ENCODE measurements at regions of chr18 and their contacts with region 1.

Region 1: GRCh38 chr18:75070625-75071483 is 138.1 kb downstream of the PTGR3 start:
- DNase-seq: peak; percentile 19 to 88 (median 74)
- ATAC-seq: peak; percentile 90
- H3K4me3 ChIP-seq: peak overlapping the region; percentile 9 to 46
- H3K4me3 Mint-ChIP-seq: peak overlapping the region; percentile 80
- H3K27ac ChIP-seq: peak overlapping the region; percentile 50 to 86
- H3K27ac Mint-ChIP-seq: peak overlapping the region; percentile 97
- H3K4me1 ChIP-seq: peaks cover 28% of the 10 kb centered on the region
- H3K4me1 Mint-ChIP-seq: peaks cover 41% of the 10 kb centered on the region
- H3K27me3 ChIP-seq: no peaks in the 10 kb centered on the region
- H3K27me3 Mint-ChIP-seq: no peaks in the 10 kb centered on the region
- CTCF ChIP-seq: no peak

Region 2: DNA sequence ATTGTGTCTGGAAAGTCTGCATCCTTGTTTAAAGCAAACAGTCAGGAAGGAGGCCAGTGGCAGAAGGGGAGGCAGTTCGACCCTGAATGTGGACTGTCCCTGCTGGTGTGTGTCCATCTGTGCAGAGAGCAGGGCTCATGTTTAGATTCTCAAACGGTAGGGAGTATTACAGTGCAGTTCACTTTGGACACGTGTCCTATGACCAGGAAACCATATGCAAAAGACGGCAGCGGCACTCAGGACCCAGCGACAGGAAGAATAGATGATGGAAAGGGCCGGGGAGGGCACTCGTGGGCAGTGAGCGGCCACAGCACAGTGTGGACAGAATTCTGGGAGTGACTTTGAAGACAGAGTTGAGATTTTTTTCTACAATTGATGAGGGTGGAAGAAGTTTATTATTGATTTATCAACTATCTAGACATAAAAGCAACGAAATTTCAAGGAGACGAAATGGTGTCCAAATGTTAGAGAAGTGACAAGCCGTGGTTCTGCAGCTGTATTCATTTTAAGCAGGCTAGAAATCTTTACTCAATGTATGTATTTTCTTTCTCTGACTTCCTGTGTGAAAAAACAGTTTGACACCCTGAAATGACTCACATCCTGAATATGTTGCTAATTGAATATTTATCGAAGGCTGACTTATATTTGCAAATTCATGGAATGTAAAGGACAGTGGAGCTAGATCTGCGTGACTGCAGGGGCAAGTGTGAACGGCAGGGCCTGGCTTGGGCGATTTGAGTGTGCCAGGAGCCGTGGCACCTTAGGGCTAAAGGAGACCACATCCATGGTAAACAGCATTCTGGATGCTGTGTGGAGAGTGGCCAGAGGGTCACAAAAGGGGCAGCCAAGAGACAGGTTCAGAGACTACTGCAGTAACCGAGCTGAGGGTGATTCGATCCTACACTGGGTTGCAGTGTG is 76.1 kb before region 1 on chr18:
- CTCF ChIA-PET with region 1: no interaction called
- POLR2A ChIA-PET with region 1: interaction called, 3 read pairs
- intact Hi-C with region 1: loop called in 1 of 2 experiments (anchors 5 kb)
- DNase-seq: peak in 5 of 9 experiments; percentile 10 to 76 (median 53)
- ATAC-seq: peak; percentile 67
- H3K4me3 ChIP-seq: peak overlapping the region in 1 of 2 experiments; percentile 42
- H3K4me3 Mint-ChIP-seq: peak overlapping the region; percentile 71
- H3K27ac ChIP-seq: peak overlapping the region; percentile 35 to 84
- H3K27ac Mint-ChIP-seq: peak overlapping the region; percentile 90
- H3K4me1 ChIP-seq: peaks cover 11% of the 10 kb centered on the region
- H3K4me1 Mint-ChIP-seq: peaks cover 51% of the 10 kb centered on the region
- H3K27me3 ChIP-seq: no peaks in the 10 kb centered on the region
- H3K27me3 Mint-ChIP-seq: no peaks in the 10 kb centered on the region
- CTCF ChIP-seq: no peak

Region 3: DNA sequence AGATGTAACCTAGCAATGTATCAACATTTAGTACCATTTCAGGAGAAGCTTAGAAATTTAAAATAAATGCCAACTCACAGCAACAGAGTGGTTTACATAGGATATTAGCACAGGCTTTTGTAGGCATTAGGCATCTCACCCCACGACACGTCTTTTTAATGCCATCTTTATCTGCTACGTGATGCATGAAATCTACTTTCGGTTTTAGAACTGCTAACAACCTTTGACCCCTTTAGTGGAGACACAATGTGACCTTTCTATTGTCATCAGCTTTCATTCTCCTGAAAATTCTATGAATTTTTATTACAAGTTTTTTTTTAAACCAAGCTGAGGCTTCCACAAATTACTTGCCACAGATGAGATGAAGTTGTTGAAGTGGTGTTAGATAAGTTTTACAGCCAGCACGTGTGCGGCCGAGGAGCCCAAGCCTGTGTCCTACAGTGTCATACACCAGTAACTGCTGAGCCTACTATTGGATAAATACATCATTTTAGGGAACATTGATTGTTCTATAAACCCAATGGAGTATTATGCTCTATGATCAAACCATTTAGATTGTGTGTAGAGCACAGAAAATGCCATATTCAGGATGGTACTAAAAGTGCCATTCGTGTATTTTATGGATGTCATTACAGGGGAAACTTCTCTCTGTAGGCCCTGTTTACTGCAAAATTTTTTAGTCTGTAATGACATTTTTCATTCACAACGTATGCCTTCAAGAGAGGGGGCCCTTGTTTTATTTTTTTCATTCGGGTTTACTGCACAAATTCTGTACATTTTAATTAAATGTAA is 13.5 kb before region 1 on chr18:
- CTCF ChIA-PET with region 1: interaction called, 3 read pairs
- POLR2A ChIA-PET with region 1: interaction called, 3 read pairs
- intact Hi-C with region 1: loop called in 1 of 2 experiments (anchors 2 kb)
- DNase-seq: no peak
- ATAC-seq: no peak
- H3K4me3 ChIP-seq: no peak overlapping the region
- H3K4me3 Mint-ChIP-seq: no peak overlapping the region
- H3K27ac ChIP-seq: no peak overlapping the region
- H3K27ac Mint-ChIP-seq: no peak overlapping the region
- H3K4me1 ChIP-seq: no peaks in the 10 kb centered on the region
- H3K4me1 Mint-ChIP-seq: no peaks in the 10 kb centered on the region
- H3K27me3 ChIP-seq: no peaks in the 10 kb centered on the region
- H3K27me3 Mint-ChIP-seq: no peaks in the 10 kb centered on the region
- CTCF ChIP-seq: no peak

Region 4: GRCh38 chr18:75088622-75089211 is 17.9 kb after region 1 on chr18:
- CTCF ChIA-PET with region 1: no interaction called
- POLR2A ChIA-PET with region 1: no interaction called
- intact Hi-C with region 1: no loop called
- DNase-seq: peak in 1 of 9 experiments; percentile 39
- ATAC-seq: no peak
- H3K4me3 ChIP-seq: no peak overlapping the region
- H3K4me3 Mint-ChIP-seq: no peak overlapping the region
- H3K27ac ChIP-seq: no peak overlapping the region
- H3K27ac Mint-ChIP-seq: no peak overlapping the region
- H3K4me1 ChIP-seq: no peaks in the 10 kb centered on the region
- H3K4me1 Mint-ChIP-seq: no peaks in the 10 kb centered on the region
- H3K27me3 ChIP-seq: no peaks in the 10 kb centered on the region
- H3K27me3 Mint-ChIP-seq: no peaks in the 10 kb centered on the region
- CTCF ChIP-seq: no peak

Region 5: GRCh38 chr18:75203416-75204268 is 132.8 kb after region 1 on chr18:
- CTCF ChIA-PET with region 1: no interaction called
- POLR2A ChIA-PET with region 1: interaction called, 3 read pairs
- intact Hi-C with region 1: loop called (anchors 2 to 5 kb)
- DNase-seq: no peak
- ATAC-seq: no peak
- H3K4me3 ChIP-seq: no peak overlapping the region
- H3K4me3 Mint-ChIP-seq: peak overlapping the region; percentile 10
- H3K27ac ChIP-seq: no peak overlapping the region
- H3K27ac Mint-ChIP-seq: no peak overlapping the region
- H3K4me1 ChIP-seq: peaks cover 27% of the 10 kb centered on the region
- H3K4me1 Mint-ChIP-seq: peaks cover 44% of the 10 kb centered on the region
- H3K27me3 ChIP-seq: no peaks in the 10 kb centered on the region
- H3K27me3 Mint-ChIP-seq: peaks cover 3% of the 10 kb centered on the region
- CTCF ChIP-seq: no peak

Measured in CD8-positive, alpha-beta T cell (primary cell).